ENCODE measurements at regions of chr6 and their contacts with region 1.

Region 1: GRCh38 chr6:27177485-27178406 is 69.8 kb upstream of the PRSS16 start:
- DNase-seq: peak; percentile 68 to 80 (median 70)
- H3K4me3 ChIP-seq: peak overlapping the region; percentile 98
- H3K4me3 Mint-ChIP-seq: peak overlapping the region; percentile 95 to 99 (median 98)
- H3K27ac ChIP-seq: peak overlapping the region; percentile 77
- H3K27ac Mint-ChIP-seq: peak overlapping the region; percentile 86 to 100 (median 93)
- H3K4me1 ChIP-seq: peaks cover 7% of the 10 kb centered on the region
- H3K4me1 Mint-ChIP-seq: peaks cover 5 to 29% (median 13%) of the 10 kb centered on the region in 4 donors
- H3K27me3 ChIP-seq: no peaks in the 10 kb centered on the region
- H3K27me3 Mint-ChIP-seq: peaks cover 3 to 4% of the 10 kb centered on the region in 2 donors

Region 2: DNA sequence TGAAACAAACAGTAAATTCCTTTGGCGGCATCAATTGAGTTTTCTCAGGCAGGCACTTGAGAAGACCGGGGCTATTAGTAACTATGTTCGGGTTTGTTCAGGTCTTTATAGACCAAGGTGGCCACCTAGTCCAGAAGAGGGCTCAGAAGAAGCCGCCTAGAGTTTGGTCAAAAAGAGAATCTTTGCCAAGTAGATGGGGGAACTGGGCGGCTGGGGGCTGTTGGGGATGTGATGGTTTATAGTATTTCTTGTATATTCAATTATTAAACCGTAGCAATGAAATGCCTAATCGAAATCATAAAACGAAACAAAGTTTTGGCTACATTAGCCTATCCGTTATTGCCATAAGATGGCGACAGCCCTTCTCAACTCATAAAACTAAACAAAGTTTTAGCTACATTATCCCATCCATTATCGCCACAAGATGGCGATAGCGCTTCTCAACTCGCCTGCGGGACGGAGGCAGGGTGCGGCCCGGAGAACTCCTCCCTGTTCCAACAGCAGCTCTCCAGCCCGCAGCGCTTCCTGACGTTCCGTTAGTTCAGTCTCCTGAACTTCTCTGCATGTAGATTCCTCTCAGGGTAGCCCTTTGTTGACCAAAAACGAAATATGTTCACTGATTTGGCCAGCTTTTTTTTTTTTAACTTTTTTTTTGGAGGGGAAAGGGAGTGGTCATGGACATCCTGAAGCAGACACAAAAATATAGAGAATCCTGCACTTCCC is 50.8 kb before region 1 on chr6:
- CTCF ChIA-PET with region 1: interaction called, 11 read pairs
- POLR2A ChIA-PET with region 1: interaction called, 53 read pairs
- intact Hi-C with region 1: no loop called
- DNase-seq: peak; percentile 78 to 86 (median 83)
- H3K4me3 ChIP-seq: peak overlapping the region; percentile 13 to 34
- H3K4me3 Mint-ChIP-seq: peak overlapping the region; percentile 71 to 87 (median 80)
- H3K27ac ChIP-seq: peak overlapping the region; percentile 37
- H3K27ac Mint-ChIP-seq: peak overlapping the region; percentile 79 to 91 (median 89)
- H3K4me1 ChIP-seq: peaks cover 16% of the 10 kb centered on the region
- H3K4me1 Mint-ChIP-seq: peaks cover 14 to 16% (median 16%) of the 10 kb centered on the region in 4 donors
- H3K27me3 ChIP-seq: no peaks in the 10 kb centered on the region
- H3K27me3 Mint-ChIP-seq: no peaks in the 10 kb centered on the region

Region 3: DNA sequence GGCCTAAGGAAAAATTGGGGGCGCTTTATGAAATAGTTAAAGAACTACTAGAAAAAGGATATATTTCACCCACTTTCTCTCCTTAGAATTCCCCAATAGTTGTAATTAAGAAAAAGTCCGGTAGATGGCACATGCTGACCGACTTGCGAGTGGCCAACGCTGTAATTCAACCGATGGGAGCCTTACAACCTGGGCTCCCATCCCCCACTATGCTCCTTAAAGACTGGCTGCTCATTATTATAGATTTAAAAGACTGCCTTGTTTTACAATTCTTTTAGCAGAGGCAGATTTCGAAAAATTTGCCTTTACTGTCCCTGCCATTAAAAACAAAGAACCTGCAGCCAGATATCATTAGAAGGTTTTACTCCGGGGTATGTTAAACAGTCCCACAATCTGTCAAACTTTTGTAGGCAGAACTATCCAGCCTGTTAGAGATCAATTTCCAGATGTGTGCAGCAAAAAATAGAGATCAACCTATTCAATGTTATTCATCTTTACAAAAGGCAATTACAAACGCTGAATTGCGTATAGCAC is 11.2 kb after region 1 on chr6:
- CTCF ChIA-PET with region 1: interaction called, 26 read pairs
- POLR2A ChIA-PET with region 1: interaction called, 18 read pairs
- intact Hi-C with region 1: loop called (anchors 1 kb)
- DNase-seq: peak; percentile 55 to 69 (median 67)
- H3K4me3 ChIP-seq: peak overlapping the region; percentile 58 to 73
- H3K4me3 Mint-ChIP-seq: peak overlapping the region; percentile 79 to 96 (median 93)
- H3K27ac ChIP-seq: peak overlapping the region; percentile 44
- H3K27ac Mint-ChIP-seq: peak overlapping the region; percentile 49 to 86 (median 73)
- H3K4me1 ChIP-seq: peaks cover 9% of the 10 kb centered on the region
- H3K4me1 Mint-ChIP-seq: peaks cover 2 to 20% (median 15%) of the 10 kb centered on the region in 4 donors
- H3K27me3 ChIP-seq: no peaks in the 10 kb centered on the region
- H3K27me3 Mint-ChIP-seq: no peaks in the 10 kb centered on the region

Region 4: GRCh38 chr6:27503436-27504030 is 325.8 kb after region 1 on chr6:
- CTCF ChIA-PET with region 1: interaction called, 3 read pairs
- POLR2A ChIA-PET with region 1: no interaction called
- intact Hi-C with region 1: loop called (anchors 1 kb)
- DNase-seq: peak; percentile 79 to 82 (median 80)
- H3K4me3 ChIP-seq: peak overlapping the region; percentile 79
- H3K4me3 Mint-ChIP-seq: peak overlapping the region; percentile 87 to 94 (median 90)
- H3K27ac ChIP-seq: peak overlapping the region; percentile 9
- H3K27ac Mint-ChIP-seq: peak overlapping the region; percentile 78 to 99 (median 91)
- H3K4me1 ChIP-seq: peaks cover 36% of the 10 kb centered on the region
- H3K4me1 Mint-ChIP-seq: peaks cover 25 to 44% (median 33%) of the 10 kb centered on the region in 4 donors
- H3K27me3 ChIP-seq: peaks cover 4% of the 10 kb centered on the region
- H3K27me3 Mint-ChIP-seq: peaks cover 0 to 25% of the 10 kb centered on the region in 2 donors

Region 5: DNA sequence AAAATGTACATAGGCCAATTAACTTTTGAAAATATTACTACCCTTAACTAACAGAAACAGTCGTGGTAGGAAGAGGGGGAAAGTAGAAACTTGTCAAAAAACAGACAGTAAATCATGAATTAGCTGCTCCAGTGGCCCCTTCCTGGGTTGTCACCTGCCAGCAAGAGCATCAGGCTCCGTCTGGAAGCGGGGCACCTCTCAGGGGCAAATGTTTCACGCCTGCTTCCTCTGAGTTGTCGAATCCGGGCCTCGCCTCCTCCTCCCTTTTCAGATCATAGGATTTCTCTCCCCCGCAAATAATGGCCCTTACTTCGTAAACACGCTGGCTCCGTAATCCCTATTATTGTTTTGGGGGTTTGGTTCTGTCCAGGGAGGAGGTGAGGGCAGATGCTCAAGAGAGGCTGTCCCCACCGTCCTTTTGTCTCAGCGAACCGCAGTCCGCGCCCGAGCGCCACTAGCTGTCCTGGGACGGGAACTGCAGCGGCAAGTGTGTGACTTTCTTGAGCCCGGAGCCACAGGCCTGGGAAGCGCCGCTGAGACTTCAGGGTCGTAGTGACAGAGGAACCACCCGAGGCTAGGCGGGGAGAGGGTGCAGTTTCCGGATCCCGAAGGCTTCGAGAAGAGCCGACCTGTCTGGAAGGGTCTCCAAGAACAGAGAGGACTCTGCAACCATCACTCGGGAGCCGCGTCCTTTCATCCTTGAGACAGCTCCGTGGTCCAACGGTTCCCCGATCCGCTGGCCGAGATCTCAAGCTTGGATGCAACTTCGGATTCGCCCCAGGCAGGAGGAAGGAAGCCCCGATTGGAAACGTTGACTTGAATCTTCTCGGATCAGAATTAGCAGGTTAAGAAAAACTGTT is 509.6 kb after region 1 on chr6:
- CTCF ChIA-PET with region 1: interaction called, 3 read pairs
- POLR2A ChIA-PET with region 1: interaction called, 9 read pairs
- intact Hi-C with region 1: loop called (anchors 1 kb)
- DNase-seq: peak; percentile 66 to 81 (median 71)
- H3K4me3 ChIP-seq: peak overlapping the region; percentile 98
- H3K4me3 Mint-ChIP-seq: peak overlapping the region; percentile 86 to 96 (median 92)
- H3K27ac ChIP-seq: peak overlapping the region; percentile 65
- H3K27ac Mint-ChIP-seq: peak overlapping the region; percentile 76 to 100 (median 94)
- H3K4me1 ChIP-seq: peaks cover 16% of the 10 kb centered on the region
- H3K4me1 Mint-ChIP-seq: peaks cover 16 to 26% (median 20%) of the 10 kb centered on the region in 4 donors
- H3K27me3 ChIP-seq: peaks cover under 1% of the 10 kb centered on the region
- H3K27me3 Mint-ChIP-seq: peaks cover 6 to 14% of the 10 kb centered on the region in 2 donors

Region 6: GRCh38 chr6:27795697-27796494 is 618.1 kb after region 1 on chr6:
- CTCF ChIA-PET with region 1: interaction called, 12 read pairs
- POLR2A ChIA-PET with region 1: interaction called, 10 read pairs
- intact Hi-C with region 1: no loop called
- DNase-seq: peak; percentile 75 to 82 (median 80)
- H3K4me3 ChIP-seq: no peak overlapping the region
- H3K4me3 Mint-ChIP-seq: peak overlapping the region in 1 of 8 donors; percentile 16
- H3K27ac ChIP-seq: no peak overlapping the region
- H3K27ac Mint-ChIP-seq: peak overlapping the region in 5 of 7 donors; percentile 6 to 91 (median 35)
- H3K4me1 ChIP-seq: peaks cover 21% of the 10 kb centered on the region
- H3K4me1 Mint-ChIP-seq: peaks cover 17 to 29% (median 21%) of the 10 kb centered on the region in 4 donors
- H3K27me3 ChIP-seq: peaks cover 6% of the 10 kb centered on the region
- H3K27me3 Mint-ChIP-seq: peaks cover 6 to 13% of the 10 kb centered on the region in 2 donors